Natural killer cell (primary cell): ENCODE measurements at regions of chr4 and their contacts with region 1.

Region 1: DNA sequence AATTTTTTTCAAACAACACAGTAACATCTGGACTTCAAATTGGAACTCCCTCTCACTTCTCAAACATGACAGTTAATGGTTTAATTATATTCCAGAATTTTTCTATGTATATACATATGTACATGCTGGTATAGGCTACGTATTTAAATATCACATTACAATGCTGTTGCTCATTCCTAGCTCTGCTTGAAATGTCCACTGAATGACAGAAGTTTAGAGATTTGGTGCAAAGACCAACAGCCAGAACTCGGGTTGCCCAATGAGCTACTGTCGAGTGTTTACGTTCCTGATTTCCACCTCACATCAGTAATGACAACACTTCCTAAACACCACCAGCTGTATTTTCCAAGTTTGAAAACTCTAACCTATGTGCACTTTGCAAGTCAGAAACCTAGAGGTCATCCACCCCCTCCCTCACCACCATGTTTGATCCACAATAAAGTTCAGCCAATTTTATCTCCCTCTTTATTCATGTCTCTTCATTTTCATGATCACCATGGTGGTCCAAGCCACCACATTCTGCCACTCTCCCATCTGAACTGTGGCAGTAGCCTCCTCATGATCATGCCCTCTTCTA is 49.3 kb upstream of the RPL34 start:
- DNase-seq: no peak
- ATAC-seq: no peak
- H3K4me3 ChIP-seq: no peak overlapping the region
- H3K4me3 Mint-ChIP-seq: no peak overlapping the region
- H3K27ac ChIP-seq: no peak overlapping the region
- H3K27ac Mint-ChIP-seq: no peak overlapping the region
- H3K4me1 ChIP-seq: peaks cover 4% of the 10 kb centered on the region
- H3K4me1 Mint-ChIP-seq: peaks cover 5 to 6% of the 10 kb centered on the region in 2 donors
- H3K27me3 ChIP-seq: peaks cover 4% of the 10 kb centered on the region
- H3K27me3 Mint-ChIP-seq: peaks cover 7 to 17% of the 10 kb centered on the region in 2 donors
- CTCF ChIP-seq: no peak

Region 2: DNA sequence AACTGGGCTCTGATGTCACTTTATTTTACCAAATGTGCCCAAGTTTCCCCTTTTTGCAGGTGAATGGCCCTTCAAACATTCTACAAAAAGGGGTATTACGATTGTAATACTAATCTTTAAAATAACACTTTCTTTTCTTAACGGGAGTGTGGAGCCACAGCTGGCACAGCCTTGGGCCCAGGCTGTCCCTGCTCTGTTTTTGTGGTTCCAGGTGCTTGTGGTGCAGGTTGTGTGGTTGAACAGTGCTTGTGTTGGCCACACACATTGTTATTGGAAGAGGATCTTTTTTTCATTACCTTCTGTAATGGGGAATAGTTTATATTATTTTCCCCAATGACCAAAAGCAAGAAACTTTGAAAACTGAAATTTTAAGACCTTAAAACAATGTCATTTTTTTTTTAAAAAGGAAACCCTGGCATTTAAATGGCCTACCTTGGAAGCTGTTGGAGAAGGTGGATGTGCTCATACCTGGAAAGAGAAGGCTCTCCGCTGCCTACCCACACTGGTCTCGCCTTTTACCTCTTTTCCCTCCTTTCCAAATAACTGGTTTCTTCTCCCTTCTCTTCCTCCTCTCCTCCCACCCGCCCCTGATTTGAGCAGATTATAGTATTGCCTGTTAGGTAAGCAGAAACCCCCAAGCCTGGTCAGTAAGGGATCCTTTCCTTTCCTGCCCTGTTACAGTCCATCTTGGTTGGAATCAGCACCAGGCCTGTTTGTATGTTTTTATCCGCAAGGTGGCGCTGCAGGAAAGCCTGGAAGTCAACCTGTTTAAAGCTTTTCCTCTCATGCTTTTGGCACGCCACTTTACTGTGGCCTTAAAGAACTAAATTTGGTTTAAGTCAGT is 552.8 kb before region 1 on chr4:
- intact Hi-C with region 1: loop called (anchors 1 kb)
- DNase-seq: peak; percentile 70 to 90
- ATAC-seq: peak; percentile 65 to 75 (median 68)
- H3K4me3 ChIP-seq: no peak overlapping the region
- H3K4me3 Mint-ChIP-seq: no peak overlapping the region
- H3K27ac ChIP-seq: no peak overlapping the region
- H3K27ac Mint-ChIP-seq: no peak overlapping the region
- H3K4me1 ChIP-seq: peaks cover 2% of the 10 kb centered on the region
- H3K4me1 Mint-ChIP-seq: peaks cover 0 to 6% of the 10 kb centered on the region in 2 donors
- H3K27me3 ChIP-seq: no peaks in the 10 kb centered on the region
- H3K27me3 Mint-ChIP-seq: no peaks in the 10 kb centered on the region
- CTCF ChIP-seq: peak; percentile 83

Region 3: GRCh38 chr4:108030332-108030731 is 540.7 kb before region 1 on chr4:
- intact Hi-C with region 1: loop called (anchors 5 kb)
- DNase-seq: peak in 1 of 2 donors; percentile 87
- ATAC-seq: peak; percentile 67 to 71 (median 69)
- H3K4me3 ChIP-seq: no peak overlapping the region
- H3K4me3 Mint-ChIP-seq: no peak overlapping the region
- H3K27ac ChIP-seq: no peak overlapping the region
- H3K27ac Mint-ChIP-seq: peak overlapping the region in 1 of 2 donors; percentile 26
- H3K4me1 ChIP-seq: peaks cover 7% of the 10 kb centered on the region
- H3K4me1 Mint-ChIP-seq: peaks cover 0 to 16% of the 10 kb centered on the region in 2 donors
- H3K27me3 ChIP-seq: no peaks in the 10 kb centered on the region
- H3K27me3 Mint-ChIP-seq: no peaks in the 10 kb centered on the region
- CTCF ChIP-seq: no peak

Region 4: GRCh38 chr4:108060164-108060563 is 510.9 kb before region 1 on chr4:
- intact Hi-C with region 1: loop called (anchors 1 kb)
- DNase-seq: peak in 1 of 2 donors; percentile 54
- ATAC-seq: peak in 2 of 3 donors; percentile 22 to 38
- H3K4me3 ChIP-seq: no peak overlapping the region
- H3K4me3 Mint-ChIP-seq: no peak overlapping the region
- H3K27ac ChIP-seq: no peak overlapping the region
- H3K27ac Mint-ChIP-seq: no peak overlapping the region
- H3K4me1 ChIP-seq: no peaks in the 10 kb centered on the region
- H3K4me1 Mint-ChIP-seq: peaks cover 0 to 8% of the 10 kb centered on the region in 2 donors
- H3K27me3 ChIP-seq: no peaks in the 10 kb centered on the region
- H3K27me3 Mint-ChIP-seq: peaks cover 0 to 10% of the 10 kb centered on the region in 2 donors
- CTCF ChIP-seq: peak; percentile 47

Region 5: GRCh38 chr4:108804648-108805273 is 233.7 kb after region 1 on chr4:
- intact Hi-C with region 1: no loop called
- DNase-seq: no peak
- ATAC-seq: no peak
- H3K4me3 ChIP-seq: no peak overlapping the region
- H3K4me3 Mint-ChIP-seq: no peak overlapping the region
- H3K27ac ChIP-seq: no peak overlapping the region
- H3K27ac Mint-ChIP-seq: no peak overlapping the region
- H3K4me1 ChIP-seq: no peaks in the 10 kb centered on the region
- H3K4me1 Mint-ChIP-seq: no peaks in the 10 kb centered on the region
- H3K27me3 ChIP-seq: no peaks in the 10 kb centered on the region
- H3K27me3 Mint-ChIP-seq: peaks cover 0 to 4% of the 10 kb centered on the region in 2 donors
- CTCF ChIP-seq: no peak

Region 6: GRCh38 chr4:108959491-108959890 is 388.4 kb after region 1 on chr4:
- intact Hi-C with region 1: no loop called
- DNase-seq: no peak
- ATAC-seq: no peak
- H3K4me3 ChIP-seq: no peak overlapping the region
- H3K4me3 Mint-ChIP-seq: no peak overlapping the region
- H3K27ac ChIP-seq: no peak overlapping the region
- H3K27ac Mint-ChIP-seq: no peak overlapping the region
- H3K4me1 ChIP-seq: no peaks in the 10 kb centered on the region
- H3K4me1 Mint-ChIP-seq: no peaks in the 10 kb centered on the region
- H3K27me3 ChIP-seq: no peaks in the 10 kb centered on the region
- H3K27me3 Mint-ChIP-seq: no peaks in the 10 kb centered on the region
- CTCF ChIP-seq: no peak